ENCODE measurements at regions of chr6 and their contacts with region 1.

Region 1: DNA sequence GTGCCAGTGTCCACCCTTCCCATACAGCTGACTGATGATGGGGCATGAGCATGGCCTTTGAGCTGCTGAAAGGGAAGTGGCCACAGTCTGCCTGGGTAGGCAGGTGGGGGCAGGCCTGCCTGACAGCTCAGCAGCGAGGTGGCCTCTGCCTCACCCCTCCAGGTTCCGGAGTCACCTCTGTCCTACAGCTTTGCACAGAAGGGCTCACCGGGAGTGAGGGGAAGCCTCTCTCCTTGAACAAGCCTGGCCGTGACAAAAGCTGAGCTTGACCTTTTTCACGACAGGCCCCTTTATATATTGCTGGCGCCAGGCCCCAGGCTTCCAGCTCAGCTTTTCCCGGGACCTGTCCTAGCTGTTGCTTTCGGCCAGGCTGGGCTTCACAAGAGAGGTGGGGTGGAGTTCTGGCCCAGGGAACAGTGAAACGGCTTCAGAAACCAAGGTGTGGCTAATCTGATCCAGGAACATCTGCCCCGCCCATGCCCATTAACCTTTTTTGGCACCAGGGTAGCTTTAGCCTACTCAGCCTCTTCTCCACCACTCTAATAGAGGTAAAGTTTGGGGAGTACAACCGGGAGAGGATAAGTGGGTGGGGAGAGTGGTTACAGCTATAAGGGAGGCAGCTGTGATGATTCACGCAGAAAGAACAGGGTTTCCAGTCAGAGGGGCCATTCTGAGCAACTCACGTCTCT is 42.9 kb downstream of the C6orf132 start:
- DNase-seq: peak; percentile 97
- H3K4me3 Mint-ChIP-seq: peak overlapping the region; percentile 15
- H3K27ac Mint-ChIP-seq: peak overlapping the region; percentile 46
- H3K4me1 Mint-ChIP-seq: peaks cover 30% of the 10 kb centered on the region
- H3K27me3 Mint-ChIP-seq: no peaks in the 10 kb centered on the region
- CTCF ChIP-seq: no peak

Region 2: GRCh38 chr6:42118162-42119001 is 18.9 kb after region 1 on chr6:
- CTCF ChIA-PET with region 1: no interaction called
- POLR2A ChIA-PET with region 1: interaction called, 27 read pairs
- intact Hi-C with region 1: no loop called
- DNase-seq: peak; percentile 89
- H3K4me3 Mint-ChIP-seq: no peak overlapping the region
- H3K27ac Mint-ChIP-seq: peak overlapping the region; percentile 63
- H3K4me1 Mint-ChIP-seq: peaks cover 26% of the 10 kb centered on the region
- H3K27me3 Mint-ChIP-seq: no peaks in the 10 kb centered on the region
- CTCF ChIP-seq: no peak

Region 3: DNA sequence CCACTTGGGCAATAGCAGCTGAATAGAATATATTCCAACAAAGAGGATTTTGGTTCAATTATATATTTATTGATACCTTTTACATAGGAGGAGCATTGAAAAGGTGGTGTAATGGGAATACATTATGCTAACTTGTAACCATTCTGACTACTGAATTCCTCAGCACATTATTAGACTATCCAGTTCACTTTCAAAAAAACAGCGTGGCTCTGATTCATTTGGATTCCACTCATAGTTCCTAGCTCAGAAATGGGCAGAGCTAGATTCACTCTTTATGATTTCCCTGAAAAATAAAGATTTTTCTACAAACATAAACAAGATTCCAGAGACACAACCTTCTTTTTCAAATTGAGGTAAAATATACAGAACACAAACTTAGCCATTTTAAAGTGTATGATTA is 361.4 kb after region 1 on chr6:
- CTCF ChIA-PET with region 1: no interaction called
- POLR2A ChIA-PET with region 1: no interaction called
- intact Hi-C with region 1: no loop called
- DNase-seq: no peak
- H3K4me3 Mint-ChIP-seq: no peak overlapping the region
- H3K27ac Mint-ChIP-seq: no peak overlapping the region
- H3K4me1 Mint-ChIP-seq: no peaks in the 10 kb centered on the region
- H3K27me3 Mint-ChIP-seq: no peaks in the 10 kb centered on the region
- CTCF ChIP-seq: no peak